ENCODE measurements at regions of chr11 and their contacts with region 1.

Region 1: GRCh38 chr11:43895601-43896000 is 15.0 kb downstream of the ALKBH3 start:
- DNase-seq: no peak

Region 2: GRCh38 chr11:43944761-43945311 is 49.2 kb after region 1 on chr11:
- intact Hi-C with region 1: loop called (anchors 1 kb)
- DNase-seq: peak in 8 of 10 donors; percentile 54 to 94 (median 79)

Region 3: GRCh38 chr11:44036811-44037657 is 141.4 kb after region 1 on chr11:
- intact Hi-C with region 1: loop called (anchors 1 kb)
- DNase-seq: peak; percentile 75 to 97 (median 84)

Region 4: DNA sequence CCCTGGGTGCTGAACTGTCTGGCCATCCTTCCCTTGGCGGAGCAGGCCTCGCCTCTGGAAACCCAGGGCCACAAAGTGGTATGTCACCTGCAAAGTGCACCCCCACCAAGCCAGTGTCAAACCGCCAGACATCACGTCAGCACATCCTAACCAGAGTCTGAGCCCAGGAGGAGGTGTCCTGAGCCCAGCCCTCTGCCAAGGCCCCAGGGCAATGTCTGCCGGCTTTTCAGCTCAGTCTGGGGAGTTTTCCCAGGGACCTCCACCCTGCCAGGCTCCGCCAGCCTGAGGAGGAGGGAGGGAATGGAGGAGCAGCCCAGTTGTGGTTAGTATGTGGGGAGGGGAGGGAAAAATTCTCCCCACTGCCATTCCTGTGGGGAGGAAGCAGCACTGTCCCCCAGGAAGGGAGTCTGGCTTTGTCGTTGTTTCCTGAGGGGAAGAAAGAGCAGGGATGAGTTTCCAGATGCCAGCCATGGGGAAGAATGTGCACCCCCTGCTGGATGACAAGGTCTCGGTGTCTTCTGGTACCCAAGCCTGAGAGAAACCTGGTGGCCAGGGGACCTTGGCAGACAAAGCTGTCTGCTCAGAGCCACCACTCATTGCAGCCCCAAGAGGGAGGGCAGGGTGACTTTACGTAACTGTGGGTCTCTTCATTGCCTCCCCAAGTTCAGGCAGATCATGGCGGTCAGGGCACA is 588.5 kb after region 1 on chr11:
- intact Hi-C with region 1: no loop called
- DNase-seq: peak in 1 of 10 donors; percentile 3

Measured in posterior cingulate gyrus (tissue), 11 donors.